Activated CD8-positive, alpha-beta T cell treated with anti-CD3 and anti-CD28 coated beads for 36 hours (primary cell): ENCODE measurements at regions of chr16 and their contacts with region 1.

Region 1: GRCh38 chr16:11715246-11715947 is 27.3 kb downstream of the TXNDC11 start:
- DNase-seq: no peak
- ATAC-seq: no peak
- H3K4me3 Mint-ChIP-seq: no peak overlapping the region
- H3K27ac Mint-ChIP-seq: no peak overlapping the region
- H3K4me1 Mint-ChIP-seq: peaks cover 18% of the 10 kb centered on the region
- H3K27me3 Mint-ChIP-seq: no peaks in the 10 kb centered on the region
- CTCF ChIP-seq: no peak

Region 2: GRCh38 chr16:11396241-11397048 is 319.0 kb before region 1 on chr16:
- CTCF ChIA-PET with region 1: interaction called, 14 read pairs
- POLR2A ChIA-PET with region 1: no interaction called
- intact Hi-C with region 1: loop called (anchors 10 kb)
- DNase-seq: peak; percentile 72
- ATAC-seq: peak; percentile 92
- H3K4me3 Mint-ChIP-seq: no peak overlapping the region
- H3K27ac Mint-ChIP-seq: peak overlapping the region; percentile 25
- H3K4me1 Mint-ChIP-seq: no peaks in the 10 kb centered on the region
- H3K27me3 Mint-ChIP-seq: no peaks in the 10 kb centered on the region
- CTCF ChIP-seq: peak; percentile 100

Region 3: DNA sequence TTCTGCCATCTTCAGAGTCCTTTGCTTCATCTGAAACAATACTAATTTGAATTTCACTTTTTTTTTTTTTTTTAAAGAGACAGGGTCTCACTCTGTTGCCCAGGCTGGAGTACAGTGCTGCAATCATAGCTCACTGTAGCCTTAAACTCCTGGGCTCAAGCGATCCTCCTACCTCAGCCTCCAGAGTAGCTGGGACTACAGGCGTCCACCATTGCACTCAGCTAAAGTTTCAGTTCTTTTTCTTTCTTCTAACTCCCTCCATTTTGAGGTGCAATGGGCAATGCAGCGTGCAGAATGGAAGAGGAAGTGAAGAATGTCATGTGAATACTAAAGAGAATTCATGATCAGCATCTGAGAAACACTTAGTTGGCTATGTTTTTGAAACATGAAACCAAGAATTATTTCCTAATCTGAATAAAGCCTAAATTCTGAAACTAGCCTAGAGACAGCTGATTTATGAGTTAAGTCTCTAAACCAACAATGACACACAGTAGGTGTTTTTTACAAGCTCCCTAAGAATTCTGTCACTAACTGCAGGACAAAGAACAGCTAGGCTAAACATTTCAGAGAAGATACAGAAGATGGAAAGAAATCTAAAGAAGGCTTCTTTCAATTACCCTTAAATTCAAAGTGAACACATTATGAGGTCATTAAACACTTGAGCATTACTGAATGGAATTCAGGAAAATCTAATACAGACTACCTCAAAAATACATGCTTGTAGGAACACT is 26.2 kb before region 1 on chr16:
- CTCF ChIA-PET with region 1: interaction called, 21 read pairs
- POLR2A ChIA-PET with region 1: no interaction called
- intact Hi-C with region 1: no loop called
- DNase-seq: no peak
- ATAC-seq: peak; percentile 34
- H3K4me3 Mint-ChIP-seq: no peak overlapping the region
- H3K27ac Mint-ChIP-seq: peak overlapping the region; percentile 23
- H3K4me1 Mint-ChIP-seq: peaks cover 18% of the 10 kb centered on the region
- H3K27me3 Mint-ChIP-seq: no peaks in the 10 kb centered on the region
- CTCF ChIP-seq: no peak

Region 4: GRCh38 chr16:11734025-11734652 is 18.7 kb after region 1 on chr16:
- CTCF ChIA-PET with region 1: interaction called, 18 read pairs
- POLR2A ChIA-PET with region 1: interaction called, 4 read pairs
- intact Hi-C with region 1: no loop called
- DNase-seq: no peak
- ATAC-seq: peak; percentile 34
- H3K4me3 Mint-ChIP-seq: no peak overlapping the region
- H3K27ac Mint-ChIP-seq: peak overlapping the region; percentile 76
- H3K4me1 Mint-ChIP-seq: peaks cover 37% of the 10 kb centered on the region
- H3K27me3 Mint-ChIP-seq: no peaks in the 10 kb centered on the region
- CTCF ChIP-seq: no peak

Region 5: GRCh38 chr16:11797166-11797956 is 82.0 kb after region 1 on chr16 and contains the start of gene ZC3H7A:
- CTCF ChIA-PET with region 1: interaction called, 12 read pairs
- POLR2A ChIA-PET with region 1: interaction called, 3 read pairs
- intact Hi-C with region 1: no loop called
- DNase-seq: peak; percentile 95
- ATAC-seq: peak; percentile 98
- H3K4me3 Mint-ChIP-seq: peak within 1 kb of the TSS; percentile 89
- H3K27ac Mint-ChIP-seq: peak within 1 kb of the TSS; percentile 96
- H3K4me1 Mint-ChIP-seq: peaks cover 61% of the 10 kb centered on the region
- H3K27me3 Mint-ChIP-seq: no peaks in the 10 kb centered on the region
- CTCF ChIP-seq: peak; percentile 74
- total RNA-seq, gene ZC3H7A: 62.3 to 67.8 TPM